Caco-2 (cell line): ENCODE measurements at regions of chr5 and their contacts with region 1.

Region 1: GRCh38 chr5:146965761-146966659 is 87.5 kb upstream of the PPP2R2B start:
- DNase-seq: peak; percentile 73 to 82
- H3K4me3 ChIP-seq: no peak overlapping the region
- H3K4me3 Mint-ChIP-seq: no peak overlapping the region
- H3K27ac Mint-ChIP-seq: no peak overlapping the region
- H3K4me1 ChIP-seq: no peaks in the 10 kb centered on the region
- H3K4me1 Mint-ChIP-seq: peaks cover 11% of the 10 kb centered on the region
- H3K27me3 ChIP-seq: no peaks in the 10 kb centered on the region
- H3K27me3 Mint-ChIP-seq: no peaks in the 10 kb centered on the region
- CTCF ChIP-seq: peak; percentile 71 to 73

Region 2: DNA sequence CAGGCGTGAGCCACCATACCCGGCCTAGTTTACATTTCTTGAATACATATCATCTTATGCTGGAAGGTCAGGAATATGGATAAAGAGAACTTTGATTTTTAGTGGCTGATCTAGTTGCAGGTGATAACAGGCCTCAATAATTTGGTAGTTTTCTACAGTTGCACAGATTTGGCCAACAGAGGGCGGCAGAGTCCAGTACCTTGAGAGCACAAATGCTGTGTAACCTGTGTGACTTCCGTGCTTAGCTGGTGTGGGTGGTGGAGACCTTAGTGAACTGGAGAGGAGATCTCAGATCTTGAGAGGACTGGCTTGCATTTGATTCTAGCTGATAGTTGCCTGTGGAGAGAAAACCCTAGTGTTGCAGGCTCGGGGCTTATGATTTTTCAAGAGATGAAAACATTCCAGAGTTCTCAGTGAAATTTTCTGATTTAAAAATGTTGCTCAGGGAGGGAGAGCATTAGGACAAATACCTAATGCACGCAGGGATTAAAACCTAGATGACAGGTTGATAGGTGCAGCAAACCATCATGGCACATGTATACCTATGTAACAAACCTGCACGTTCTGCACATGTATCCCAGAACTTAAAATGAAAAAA is 432.7 kb before region 1 on chr5:
- CTCF ChIA-PET with region 1: interaction called, 12 read pairs
- POLR2A ChIA-PET with region 1: no interaction called
- intact Hi-C with region 1: loop called (anchors 1 kb)
- DNase-seq: peak; percentile 81 to 82
- H3K4me3 ChIP-seq: no peak overlapping the region
- H3K4me3 Mint-ChIP-seq: no peak overlapping the region
- H3K27ac Mint-ChIP-seq: no peak overlapping the region
- H3K4me1 ChIP-seq: no peaks in the 10 kb centered on the region
- H3K4me1 Mint-ChIP-seq: no peaks in the 10 kb centered on the region
- H3K27me3 ChIP-seq: no peaks in the 10 kb centered on the region
- H3K27me3 Mint-ChIP-seq: no peaks in the 10 kb centered on the region
- CTCF ChIP-seq: peak; percentile 86 to 90

Region 3: GRCh38 chr5:146565764-146566367 is 400.1 kb before region 1 on chr5:
- CTCF ChIA-PET with region 1: interaction called, 8 read pairs
- POLR2A ChIA-PET with region 1: no interaction called
- intact Hi-C with region 1: loop called (anchors 1 kb)
- DNase-seq: peak; percentile 73 to 74
- H3K4me3 ChIP-seq: no peak overlapping the region
- H3K4me3 Mint-ChIP-seq: no peak overlapping the region
- H3K27ac Mint-ChIP-seq: no peak overlapping the region
- H3K4me1 ChIP-seq: no peaks in the 10 kb centered on the region; the same call in 1 of the 2 replicates
- H3K4me1 Mint-ChIP-seq: peaks cover 5% of the 10 kb centered on the region
- H3K27me3 ChIP-seq: no peaks in the 10 kb centered on the region
- H3K27me3 Mint-ChIP-seq: peaks cover 4% of the 10 kb centered on the region
- CTCF ChIP-seq: peak; percentile 73 to 74

Region 4: DNA sequence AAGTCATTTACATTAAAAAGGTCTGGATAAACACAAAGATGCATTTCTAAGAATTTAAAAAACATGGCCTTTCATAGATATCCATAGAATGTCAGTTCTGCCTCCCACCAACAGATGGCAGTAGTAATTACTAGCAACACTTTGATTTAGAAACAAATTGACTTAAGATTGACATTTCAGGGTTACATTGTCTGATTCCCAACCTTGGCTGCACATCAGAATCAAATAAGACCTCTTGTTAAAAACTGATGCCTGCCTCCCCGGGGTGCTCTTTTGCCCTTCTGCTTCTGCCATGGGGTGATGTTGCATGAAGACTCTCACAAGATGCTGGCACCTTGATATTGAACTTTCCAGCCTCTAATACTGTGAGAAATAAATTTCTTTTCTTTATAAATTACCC is 303.8 kb before region 1 on chr5:
- CTCF ChIA-PET with region 1: interaction called, 3 read pairs
- POLR2A ChIA-PET with region 1: no interaction called
- intact Hi-C with region 1: loop called (anchors 1 kb)
- DNase-seq: peak in 1 of 2 experiments; percentile 32
- H3K4me3 ChIP-seq: no peak overlapping the region
- H3K4me3 Mint-ChIP-seq: no peak overlapping the region
- H3K27ac Mint-ChIP-seq: no peak overlapping the region
- H3K4me1 ChIP-seq: no peaks in the 10 kb centered on the region
- H3K4me1 Mint-ChIP-seq: no peaks in the 10 kb centered on the region
- H3K27me3 ChIP-seq: no peaks in the 10 kb centered on the region
- H3K27me3 Mint-ChIP-seq: no peaks in the 10 kb centered on the region
- CTCF ChIP-seq: peak; percentile 60 to 66

Region 5: DNA sequence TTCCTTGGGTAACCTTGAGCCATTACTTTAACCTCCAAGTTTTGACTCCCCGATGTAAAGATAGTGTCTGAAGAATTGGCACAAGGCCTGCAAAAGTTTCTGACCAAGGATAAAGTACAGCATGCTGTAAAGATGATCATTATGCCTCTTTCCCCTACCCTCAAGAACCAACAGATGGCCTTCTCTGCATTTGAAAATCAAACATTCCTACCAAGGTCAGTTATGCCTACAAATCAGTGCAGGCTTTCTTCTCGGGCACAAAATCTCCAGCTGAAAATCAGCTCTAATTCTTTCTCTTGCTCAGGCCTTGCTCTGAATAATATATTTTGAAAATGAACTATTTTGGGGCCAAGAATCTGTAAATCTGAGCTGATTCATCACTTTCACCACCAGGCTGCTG is 147.2 kb before region 1 on chr5:
- CTCF ChIA-PET with region 1: interaction called, 12 read pairs
- POLR2A ChIA-PET with region 1: no interaction called
- intact Hi-C with region 1: loop called (anchors 2 kb)
- DNase-seq: no peak
- H3K4me3 ChIP-seq: no peak overlapping the region
- H3K4me3 Mint-ChIP-seq: no peak overlapping the region
- H3K27ac Mint-ChIP-seq: no peak overlapping the region
- H3K4me1 ChIP-seq: no peaks in the 10 kb centered on the region
- H3K4me1 Mint-ChIP-seq: no peaks in the 10 kb centered on the region
- H3K27me3 ChIP-seq: no peaks in the 10 kb centered on the region
- H3K27me3 Mint-ChIP-seq: peaks cover 5% of the 10 kb centered on the region
- CTCF ChIP-seq: peak in 1 of 2 experiments; percentile 53